ENCODE measurements at regions of chr5 and their contacts with region 1.

Region 1: GRCh38 chr5:101364469-101364868 is 461.4 kb upstream of the ST8SIA4 start:
- DNase-seq: no peak
- ATAC-seq: no peak
- H3K4me3 ChIP-seq: no peak overlapping the region
- H3K4me3 Mint-ChIP-seq: no peak overlapping the region
- H3K27ac ChIP-seq: no peak overlapping the region
- H3K27ac Mint-ChIP-seq: no peak overlapping the region
- H3K4me1 ChIP-seq: no peaks in the 10 kb centered on the region
- H3K4me1 Mint-ChIP-seq: no peaks in the 10 kb centered on the region
- H3K27me3 ChIP-seq: no peaks in the 10 kb centered on the region
- H3K27me3 Mint-ChIP-seq: no peaks in the 10 kb centered on the region
- CTCF ChIP-seq: no peak

Region 2: GRCh38 chr5:101112645-101113044 is 251.8 kb before region 1 on chr5:
- CTCF ChIA-PET with region 1: no interaction called
- POLR2A ChIA-PET with region 1: no interaction called
- intact Hi-C with region 1: no loop called
- DNase-seq: no peak
- ATAC-seq: no peak
- H3K4me3 ChIP-seq: no peak overlapping the region
- H3K4me3 Mint-ChIP-seq: no peak overlapping the region
- H3K27ac ChIP-seq: no peak overlapping the region
- H3K27ac Mint-ChIP-seq: no peak overlapping the region
- H3K4me1 ChIP-seq: no peaks in the 10 kb centered on the region
- H3K4me1 Mint-ChIP-seq: no peaks in the 10 kb centered on the region
- H3K27me3 ChIP-seq: no peaks in the 10 kb centered on the region
- H3K27me3 Mint-ChIP-seq: peaks cover 3% of the 10 kb centered on the region
- CTCF ChIP-seq: no peak

Region 3: GRCh38 chr5:101176605-101177004 is 187.9 kb before region 1 on chr5:
- CTCF ChIA-PET with region 1: no interaction called
- POLR2A ChIA-PET with region 1: no interaction called
- intact Hi-C with region 1: loop called in 1 of 2 experiments (anchors 5 kb)
- DNase-seq: no peak
- ATAC-seq: no peak
- H3K4me3 ChIP-seq: no peak overlapping the region
- H3K4me3 Mint-ChIP-seq: no peak overlapping the region
- H3K27ac ChIP-seq: no peak overlapping the region
- H3K27ac Mint-ChIP-seq: no peak overlapping the region
- H3K4me1 ChIP-seq: no peaks in the 10 kb centered on the region
- H3K4me1 Mint-ChIP-seq: no peaks in the 10 kb centered on the region
- H3K27me3 ChIP-seq: no peaks in the 10 kb centered on the region
- H3K27me3 Mint-ChIP-seq: no peaks in the 10 kb centered on the region
- CTCF ChIP-seq: no peak